ENCODE measurements at regions of chr6 and their contacts with region 1.

Region 1: DNA sequence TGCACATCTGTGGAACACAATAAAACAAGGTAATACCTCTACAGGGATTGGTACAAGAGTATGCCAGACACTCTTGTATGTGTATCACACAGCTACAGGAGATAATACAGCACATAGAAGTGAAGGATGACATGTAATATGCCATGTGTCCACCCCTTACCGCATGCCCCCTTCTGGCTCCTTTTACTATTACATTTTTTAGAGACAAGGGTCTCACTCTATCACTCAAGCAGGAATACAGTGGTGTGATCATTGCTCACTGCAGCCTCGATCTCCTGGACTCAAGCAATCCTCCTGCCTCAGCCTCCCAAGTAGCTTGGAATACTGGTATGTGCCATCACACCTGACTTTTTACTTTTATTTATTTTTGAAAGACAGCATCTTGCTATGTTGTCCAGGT is 4.2 kb upstream of the NCR3 start:
- DNase-seq: no peak
- ATAC-seq: peak; percentile 84
- H3K4me3 ChIP-seq: no peak overlapping the region
- H3K27ac ChIP-seq: no peak overlapping the region
- H3K4me1 ChIP-seq: peaks cover 18% of the 10 kb centered on the region
- H3K27me3 ChIP-seq: no peaks in the 10 kb centered on the region
- CTCF ChIP-seq: peak; percentile 45 to 64 (median 56)
- EP300 ChIP-seq: no peak
- POLR2A ChIP-seq: no peak
- RAD21 ChIP-seq: peak; percentile 74

Region 2: GRCh38 chr6:31403283-31403989 is 193.6 kb before region 1 on chr6 and contains the start of gene MICA:
- CTCF ChIA-PET with region 1: interaction called, 3 read pairs
- POLR2A ChIA-PET with region 1: no interaction called
- RAD21 ChIA-PET with region 1: no interaction called
- SMC1A ChIA-PET with region 1: interaction called, 5 read pairs
- in situ Hi-C with region 1: no loop called
- intact Hi-C with region 1: loop called (anchors 10 kb)
- DNase-seq: no peak
- ATAC-seq: peak; percentile 80
- H3K4me3 ChIP-seq: peak within 1 kb of the TSS; percentile 71
- H3K27ac ChIP-seq: peak within 1 kb of the TSS; percentile 58
- H3K4me1 ChIP-seq: peaks cover 16% of the 10 kb centered on the region
- H3K27me3 ChIP-seq: no peaks in the 10 kb centered on the region
- CTCF ChIP-seq: no peak
- EP300 ChIP-seq: no peak
- POLR2A ChIP-seq: no peak; the same call in 1 of the 2 replicates
- RAD21 ChIP-seq: no peak
- polyA plus RNA-seq, gene MICA: 5.0 to 5.6 TPM

Region 3: GRCh38 chr6:31541658-31542521 is 55.1 kb before region 1 on chr6 and contains the start of gene DDX39B:
- CTCF ChIA-PET with region 1: interaction called, 2,098 read pairs
- POLR2A ChIA-PET with region 1: interaction called, 40 read pairs
- RAD21 ChIA-PET with region 1: interaction called, 668 read pairs
- SMC1A ChIA-PET with region 1: interaction called, 1,989 read pairs
- in situ Hi-C with region 1: loop called (anchors 5 kb)
- intact Hi-C with region 1: loop called (anchors 1 kb)
- DNase-seq: peak; percentile 93
- ATAC-seq: peak; percentile 81
- H3K4me3 ChIP-seq: peak within 1 kb of the TSS; percentile 94
- H3K27ac ChIP-seq: peak within 1 kb of the TSS; percentile 97
- H3K4me1 ChIP-seq: no peaks in the 10 kb centered on the region
- H3K27me3 ChIP-seq: no peaks in the 10 kb centered on the region
- CTCF ChIP-seq: no peak
- EP300 ChIP-seq: no peak
- POLR2A ChIP-seq: peak; percentile 96
- RAD21 ChIP-seq: no peak
- polyA plus RNA-seq, gene DDX39B: 271 to 277 TPM

Region 4: DNA sequence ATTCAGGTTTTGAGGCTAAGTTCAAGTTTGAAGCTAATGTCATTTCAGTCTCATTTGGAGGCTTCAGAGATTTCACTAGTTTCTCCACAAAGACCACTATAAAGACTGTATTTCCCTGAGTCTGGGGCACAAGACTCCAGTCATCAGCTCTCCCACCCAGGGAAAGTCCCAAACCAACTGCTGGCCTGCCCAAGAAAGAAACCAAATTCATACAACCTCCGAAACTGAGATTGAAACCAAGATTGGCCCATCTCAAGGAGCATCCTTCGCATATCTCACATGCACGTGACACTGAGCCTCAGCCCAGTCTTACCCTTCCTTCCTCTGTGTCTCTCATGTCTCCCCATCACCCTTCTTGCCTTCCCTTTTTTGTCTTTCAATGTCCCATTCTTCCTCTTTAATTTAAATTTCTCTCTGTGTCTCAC is 28.5 kb before region 1 on chr6:
- CTCF ChIA-PET with region 1: interaction called, 2,098 read pairs
- POLR2A ChIA-PET with region 1: interaction called, 282 read pairs
- RAD21 ChIA-PET with region 1: interaction called, 466 read pairs
- SMC1A ChIA-PET with region 1: interaction called, 1,989 read pairs
- in situ Hi-C with region 1: no loop called
- intact Hi-C with region 1: no loop called
- DNase-seq: peak; percentile 94
- ATAC-seq: peak; percentile 77
- H3K4me3 ChIP-seq: peak overlapping the region; percentile 41; the same call in 1 of the 2 replicates
- H3K27ac ChIP-seq: peak overlapping the region; percentile 90
- H3K4me1 ChIP-seq: peaks cover 64% of the 10 kb centered on the region
- H3K27me3 ChIP-seq: no peaks in the 10 kb centered on the region
- CTCF ChIP-seq: no peak
- EP300 ChIP-seq: peak; percentile 54 to 69; a peak in 2 of 4 replicates
- POLR2A ChIP-seq: no peak
- RAD21 ChIP-seq: no peak

Region 5: DNA sequence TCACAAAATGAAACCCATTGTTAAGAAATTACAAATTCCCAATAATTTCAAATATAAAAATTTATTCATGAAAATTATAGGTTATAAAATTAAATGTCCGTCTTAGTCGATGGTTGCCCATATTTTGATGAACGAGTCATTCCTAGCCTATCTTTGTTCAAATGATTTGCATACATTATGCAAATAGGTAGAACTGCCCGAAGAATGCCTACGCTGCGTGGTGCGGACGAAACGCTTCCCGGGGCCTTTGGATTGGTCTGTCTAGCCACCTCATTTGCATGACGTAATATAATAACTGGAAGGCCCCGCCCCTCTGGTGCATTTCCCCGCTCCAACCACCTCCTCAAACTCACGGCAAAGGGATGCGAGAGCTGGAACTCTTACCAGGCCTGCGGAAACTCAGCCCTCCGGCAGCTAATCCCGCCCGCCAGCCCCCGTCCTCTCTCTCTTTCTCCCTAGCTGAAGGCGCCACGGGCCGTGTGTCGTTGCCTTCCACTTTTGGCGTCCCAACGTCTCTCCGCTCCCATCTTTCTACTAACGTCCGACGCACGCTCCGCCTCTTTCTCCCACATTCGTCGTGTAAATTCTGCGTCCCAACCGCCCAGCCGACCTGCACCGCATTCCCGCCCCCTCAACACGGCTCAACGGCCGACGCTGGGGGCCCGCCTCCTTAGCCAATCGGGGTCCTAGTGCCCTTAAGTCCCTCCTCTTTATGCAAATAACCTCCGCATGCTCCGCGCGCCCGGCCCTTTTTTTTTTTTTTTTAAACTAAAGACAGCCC is 23.0 kb after region 1 on chr6:
- CTCF ChIA-PET with region 1: interaction called, 95 read pairs
- POLR2A ChIA-PET with region 1: interaction called, 19 read pairs
- RAD21 ChIA-PET with region 1: interaction called, 27 read pairs
- SMC1A ChIA-PET with region 1: interaction called, 78 read pairs
- in situ Hi-C with region 1: no loop called
- intact Hi-C with region 1: no loop called
- DNase-seq: peak; percentile 96
- ATAC-seq: peak; percentile 89
- H3K4me3 ChIP-seq: peak overlapping the region; percentile 70
- H3K27ac ChIP-seq: peak overlapping the region; percentile 98
- H3K4me1 ChIP-seq: peaks cover 21% of the 10 kb centered on the region
- H3K27me3 ChIP-seq: no peaks in the 10 kb centered on the region
- CTCF ChIP-seq: no peak
- EP300 ChIP-seq: peak in 1 of 2 experiments; percentile 35; a peak in 1 of 4 replicates
- POLR2A ChIP-seq: peak; percentile 92
- RAD21 ChIP-seq: no peak

Measured in GM12878 (cell line).